ENCODE measurements at regions of chr2 and their contacts with region 1.

Region 1: GRCh38 chr2:238263204-238264071 is 23.6 kb upstream of the HES6 start:
- DNase-seq: peak; percentile 55 to 71 (median 67)
- ATAC-seq: peak; percentile 75
- H3K4me3 ChIP-seq: no peak overlapping the region
- H3K4me3 Mint-ChIP-seq: no peak overlapping the region
- H3K27ac ChIP-seq: no peak overlapping the region
- H3K27ac Mint-ChIP-seq: peak overlapping the region in 3 of 9 donors; percentile 57 to 80 (median 68)
- H3K4me1 ChIP-seq: no peaks in the 10 kb centered on the region
- H3K4me1 Mint-ChIP-seq: peaks cover 4 to 23% (median 6%) of the 10 kb centered on the region in 7 donors
- H3K27me3 ChIP-seq: no peaks in the 10 kb centered on the region
- H3K27me3 Mint-ChIP-seq: no peaks in the 10 kb centered on the region

Region 2: DNA sequence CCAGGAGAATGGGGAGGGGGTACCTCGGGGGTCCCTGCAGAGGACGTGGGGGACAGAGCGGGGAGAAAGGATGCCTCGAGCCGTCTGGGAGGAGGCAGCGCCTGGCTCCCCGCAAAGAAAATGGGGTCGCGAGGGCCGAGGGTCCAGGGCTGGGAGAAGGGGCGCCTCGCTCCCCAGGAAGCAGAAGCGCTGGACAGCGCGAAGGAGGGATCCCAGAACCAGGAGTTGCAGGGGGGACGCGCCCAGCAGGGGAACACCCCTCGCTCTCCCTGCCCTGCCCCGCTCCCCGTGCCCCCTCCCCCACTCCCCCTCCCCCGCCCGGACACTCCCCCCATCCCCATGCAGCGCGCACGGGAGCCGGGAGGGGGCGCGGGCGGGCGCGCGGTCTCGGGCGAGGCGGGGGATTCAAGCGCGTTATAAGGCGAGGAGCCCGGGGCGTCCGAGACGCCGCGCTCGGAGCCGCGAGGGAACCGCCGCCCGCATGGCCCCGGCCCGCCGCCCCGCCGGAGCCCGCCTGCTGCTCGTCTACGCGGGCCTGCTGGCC is 104.8 kb before region 1 on chr2 and contains the start of gene ERFE:
- CTCF ChIA-PET with region 1: no interaction called
- POLR2A ChIA-PET with region 1: no interaction called
- intact Hi-C with region 1: loop called (anchors 2 kb)
- DNase-seq: peak in 8 of 9 donors; percentile 16 to 74 (median 40)
- ATAC-seq: peak; percentile 80
- H3K4me3 ChIP-seq: no peak within 1 kb of the TSS
- H3K4me3 Mint-ChIP-seq: peak within 1 kb of the TSS; percentile 54 to 79 (median 72)
- H3K27ac ChIP-seq: no peak within 1 kb of the TSS
- H3K27ac Mint-ChIP-seq: no peak within 1 kb of the TSS
- H3K4me1 ChIP-seq: peaks cover 0 to 11% of the 10 kb centered on the region in 2 donors
- H3K4me1 Mint-ChIP-seq: peaks cover 0 to 9% (median 6%) of the 10 kb centered on the region in 7 donors
- H3K27me3 ChIP-seq: no peaks in the 10 kb centered on the region
- H3K27me3 Mint-ChIP-seq: peaks cover 7 to 26% (median 13%) of the 10 kb centered on the region in 5 donors
- total RNA-seq, gene ERFE: 0.29 to 0.31 TPM in 2 of 5 experiments, not detected in the others

Region 3: GRCh38 chr2:238216651-238217184 is 46.7 kb before region 1 on chr2:
- CTCF ChIA-PET with region 1: no interaction called
- POLR2A ChIA-PET with region 1: no interaction called
- intact Hi-C with region 1: no loop called
- DNase-seq: no peak
- ATAC-seq: no peak
- H3K4me3 ChIP-seq: no peak overlapping the region
- H3K4me3 Mint-ChIP-seq: no peak overlapping the region
- H3K27ac ChIP-seq: no peak overlapping the region
- H3K27ac Mint-ChIP-seq: no peak overlapping the region
- H3K4me1 ChIP-seq: no peaks in the 10 kb centered on the region
- H3K4me1 Mint-ChIP-seq: no peaks in the 10 kb centered on the region
- H3K27me3 ChIP-seq: no peaks in the 10 kb centered on the region
- H3K27me3 Mint-ChIP-seq: peaks cover 11 to 32% (median 26%) of the 10 kb centered on the region in 5 donors

Measured in naive thymus-derived CD4-positive, alpha-beta T cell (primary cell).